ENCODE measurements at regions of chr6 and their contacts with region 1.

Region 1: DNA sequence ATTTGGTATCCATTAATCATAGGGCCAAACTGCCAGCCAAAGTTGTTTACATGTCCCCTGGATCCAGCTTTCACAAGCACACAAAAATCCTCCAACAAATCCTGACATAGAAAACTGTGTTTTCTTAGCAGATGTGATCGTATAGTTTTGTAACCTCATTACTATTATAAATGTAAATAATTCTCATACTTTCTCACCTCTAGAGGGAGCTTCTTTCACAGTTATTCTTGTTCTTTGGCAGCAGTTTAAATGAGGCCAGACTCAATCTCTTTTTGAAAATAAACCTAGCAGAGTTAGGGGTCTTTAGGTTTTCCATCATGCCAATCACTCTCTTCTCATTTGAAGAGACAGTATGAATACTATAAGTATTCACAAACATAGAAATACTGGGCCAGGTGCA is 17.0 kb upstream of the ZNF318 start:
- DNase-seq: no peak
- H3K4me3 ChIP-seq: no peak overlapping the region
- H3K27ac ChIP-seq: no peak overlapping the region
- H3K4me1 ChIP-seq: no peaks in the 10 kb centered on the region
- H3K27me3 ChIP-seq: peaks cover 26% of the 10 kb centered on the region
- CTCF ChIP-seq: peak; percentile 73

Region 2: GRCh38 chr6:43496370-43497128 is 110.1 kb after region 1 on chr6:
- intact Hi-C with region 1: loop called (anchors 10 kb)
- DNase-seq: no peak
- H3K4me3 ChIP-seq: no peak overlapping the region
- H3K27ac ChIP-seq: no peak overlapping the region
- H3K4me1 ChIP-seq: no peaks in the 10 kb centered on the region
- H3K27me3 ChIP-seq: no peaks in the 10 kb centered on the region
- CTCF ChIP-seq: peak; percentile 71

Region 3: GRCh38 chr6:44172731-44173500 is 786.4 kb after region 1 on chr6:
- intact Hi-C with region 1: no loop called
- DNase-seq: peak; percentile 88
- H3K4me3 ChIP-seq: no peak overlapping the region
- H3K27ac ChIP-seq: no peak overlapping the region
- H3K4me1 ChIP-seq: peaks cover 34% of the 10 kb centered on the region
- H3K27me3 ChIP-seq: no peaks in the 10 kb centered on the region
- CTCF ChIP-seq: peak; percentile 92

Measured in left ventricle myocardium inferior (tissue), 1 donor.